ENCODE measurements at regions of chr10 and their contacts with region 1.

Region 1: GRCh38 chr10:71713135-71714030 is 6.2 kb downstream of the C10orf105 start:
- DNase-seq: peak; percentile 80
- H3K4me3 ChIP-seq: no peak overlapping the region
- H3K27ac ChIP-seq: peak overlapping the region; percentile 82 to 87
- H3K4me1 ChIP-seq: peaks cover 10% of the 10 kb centered on the region
- H3K27me3 ChIP-seq: no peaks in the 10 kb centered on the region
- CTCF ChIP-seq: peak in 2 of 4 experiments; percentile 6 to 24
- POLR2A ChIP-seq: peak; percentile 17

Region 2: DNA sequence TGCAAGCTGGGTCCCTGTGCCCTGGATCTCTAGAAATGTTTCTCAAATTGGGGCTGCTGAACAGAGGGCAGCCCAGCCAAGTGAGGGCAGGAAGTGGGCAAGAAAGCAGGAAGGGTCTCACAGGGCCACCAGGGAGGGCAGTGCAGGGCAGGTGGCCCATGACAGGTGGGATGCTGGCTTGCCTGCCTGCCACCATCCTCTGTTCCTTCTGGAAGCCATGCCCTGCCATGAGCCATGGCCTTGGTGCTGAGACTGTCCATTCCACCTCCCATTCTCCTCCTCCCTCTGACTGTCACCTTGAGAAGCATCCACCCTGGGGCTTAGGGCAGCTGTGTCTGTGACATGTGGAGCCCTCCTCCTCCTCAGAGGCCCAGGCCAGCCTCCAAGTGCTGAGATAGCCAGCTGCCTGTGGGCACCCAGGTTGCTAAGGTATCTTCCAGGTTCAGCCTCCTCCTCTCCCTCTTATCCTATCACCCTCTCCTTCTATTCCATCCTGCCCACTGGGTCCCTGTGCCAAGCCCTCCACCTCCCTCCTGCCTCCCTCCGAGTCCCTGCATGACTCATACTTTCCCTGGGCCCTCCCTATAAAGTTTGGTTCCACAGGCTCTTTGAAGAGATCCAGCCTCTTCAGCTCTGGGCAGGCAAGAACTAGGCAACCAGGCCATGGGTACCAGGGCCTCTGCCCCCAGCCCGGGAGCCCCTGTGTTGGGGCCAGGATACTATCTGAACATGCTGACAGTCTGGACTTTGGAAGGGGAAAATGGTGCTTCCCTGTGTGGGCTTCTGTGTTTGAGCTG is 58.6 kb after region 1 on chr10:
- intact Hi-C with region 1: loop called (anchors 5 kb)
- DNase-seq: peak; percentile 42
- H3K4me3 ChIP-seq: peak overlapping the region; percentile 55 to 56
- H3K27ac ChIP-seq: peak overlapping the region; percentile 86
- H3K4me1 ChIP-seq: no peaks in the 10 kb centered on the region
- H3K27me3 ChIP-seq: no peaks in the 10 kb centered on the region
- CTCF ChIP-seq: no peak
- POLR2A ChIP-seq: peak; percentile 45

Region 3: DNA sequence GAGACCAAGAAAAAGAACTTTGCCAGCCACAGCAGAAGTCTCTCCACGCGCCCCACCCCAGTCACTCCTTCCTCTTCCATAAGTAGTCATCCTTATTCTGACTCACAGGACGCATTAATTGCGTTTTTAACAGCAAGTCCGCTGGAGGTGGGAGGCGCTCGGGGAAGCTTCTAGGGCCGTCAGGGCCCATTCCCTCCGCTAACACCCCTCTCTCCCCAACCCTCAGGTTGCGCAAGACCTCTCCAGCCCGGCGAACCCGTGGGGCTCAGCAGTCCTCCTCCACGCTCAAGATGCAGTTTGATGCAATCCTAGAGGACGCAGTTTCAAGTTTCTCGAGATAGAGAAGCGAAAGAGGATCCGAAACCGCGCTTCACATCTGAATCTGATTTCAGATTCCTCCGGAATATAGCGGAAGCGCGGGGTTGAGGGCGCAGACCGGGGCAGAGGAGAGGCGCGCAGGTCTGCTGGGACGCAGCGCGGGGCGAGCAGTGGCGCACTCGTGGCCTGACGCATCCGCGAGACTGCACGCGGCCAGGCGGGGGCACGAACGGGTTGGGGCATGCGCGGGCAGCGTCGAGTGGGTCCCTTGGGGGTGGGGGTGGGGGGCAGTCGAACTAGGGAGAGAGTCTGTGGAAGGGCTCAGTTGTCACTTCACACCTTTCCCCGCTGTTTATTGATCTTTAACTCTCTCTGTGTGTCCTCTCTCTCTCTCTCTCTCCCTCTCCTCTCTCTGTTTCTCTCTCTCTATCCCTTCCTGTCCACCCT is 175.4 kb after region 1 on chr10:
- intact Hi-C with region 1: no loop called
- DNase-seq: peak; percentile 34
- H3K4me3 ChIP-seq: peak overlapping the region; percentile 32 to 36
- H3K27ac ChIP-seq: peak overlapping the region; percentile 67
- H3K4me1 ChIP-seq: no peaks in the 10 kb centered on the region
- H3K27me3 ChIP-seq: no peaks in the 10 kb centered on the region
- CTCF ChIP-seq: peak in 1 of 4 experiments; percentile 24
- POLR2A ChIP-seq: peak; percentile 30